ENCODE measurements at regions of chr15 and their contacts with region 1.

Region 1: DNA sequence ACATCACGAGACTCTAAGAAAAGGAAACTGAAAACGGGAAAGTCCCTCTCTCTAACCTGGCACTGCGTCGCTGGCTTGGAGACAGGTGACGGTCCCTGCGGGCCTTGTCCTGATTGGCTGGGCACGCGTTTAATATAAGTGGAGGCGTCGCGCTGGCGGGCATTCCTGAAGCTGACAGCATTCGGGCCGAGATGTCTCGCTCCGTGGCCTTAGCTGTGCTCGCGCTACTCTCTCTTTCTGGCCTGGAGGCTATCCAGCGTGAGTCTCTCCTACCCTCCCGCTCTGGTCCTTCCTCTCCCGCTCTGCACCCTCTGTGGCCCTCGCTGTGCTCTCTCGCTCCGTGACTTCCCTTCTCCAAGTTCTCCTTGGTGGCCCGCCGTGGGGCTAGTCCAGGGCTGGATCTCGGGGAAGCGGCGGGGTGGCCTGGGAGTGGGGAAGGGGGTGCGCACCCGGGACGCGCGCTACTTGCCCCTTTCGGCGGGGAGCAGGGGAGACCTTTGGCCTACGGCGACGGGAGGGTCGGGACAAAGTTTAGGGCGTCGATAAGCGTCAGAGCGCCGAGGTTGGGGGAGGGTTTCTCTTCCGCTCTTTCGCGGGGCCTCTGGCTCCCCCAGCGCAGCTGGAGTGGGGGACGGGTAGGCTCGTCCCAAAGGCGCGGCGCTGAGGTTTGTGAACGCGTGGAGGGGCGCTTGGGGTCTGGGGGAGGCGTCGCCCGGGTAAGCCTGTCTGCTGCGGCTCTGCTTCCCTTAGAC is at the start of gene B2M:
- DNase-seq: peak; percentile 94
- H3K4me3 ChIP-seq: peak within 1 kb of the TSS; percentile 92
- H3K27ac ChIP-seq: peak within 1 kb of the TSS; percentile 99
- H3K4me1 ChIP-seq: peaks cover 69% of the 10 kb centered on the region
- H3K27me3 ChIP-seq: no peaks in the 10 kb centered on the region
- CTCF ChIP-seq: no peak
- total RNA-seq, gene B2M: 1,128 TPM

Region 2: DNA sequence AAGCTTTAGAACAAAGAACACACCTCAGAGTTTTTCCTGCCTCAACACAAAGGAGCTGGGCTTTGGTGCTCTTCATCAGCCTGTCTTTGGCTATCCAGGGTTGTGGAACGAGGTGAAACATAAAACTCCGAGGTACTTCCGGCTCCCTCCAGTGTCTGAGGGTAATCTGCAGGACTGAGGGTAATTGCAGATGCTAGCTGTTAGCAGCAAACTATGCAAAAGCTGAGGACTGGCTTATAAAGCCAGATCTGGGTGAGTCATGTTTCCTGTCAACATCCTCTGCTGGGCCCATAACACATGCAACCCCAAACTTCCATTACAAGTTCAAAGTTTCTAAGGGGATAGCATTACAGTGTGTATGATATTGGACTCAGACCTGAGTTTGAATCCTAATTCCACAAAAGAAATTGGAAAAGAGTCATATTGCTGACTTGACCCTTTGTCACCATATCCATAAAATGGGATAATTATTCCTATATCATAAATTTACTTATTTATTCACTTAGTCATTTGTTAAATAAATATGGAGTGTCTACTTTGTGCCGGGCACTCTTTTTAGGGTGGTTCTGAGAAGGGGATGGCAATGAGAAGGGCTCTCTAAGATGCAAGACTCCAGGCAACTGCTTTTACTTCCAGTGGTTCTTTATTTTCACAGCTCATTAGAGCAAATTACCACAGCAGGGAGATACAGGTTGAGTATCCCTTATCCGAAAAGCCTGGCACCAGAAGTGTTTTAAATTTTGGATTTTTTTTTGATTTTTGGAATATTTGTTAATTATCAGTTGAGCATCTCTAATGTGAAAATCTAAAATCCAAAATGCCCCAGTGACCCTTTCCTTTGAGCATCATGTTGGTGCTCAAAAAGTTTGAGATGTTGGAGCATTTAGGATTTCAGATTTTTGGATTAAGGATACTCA is 15.3 kb after region 1 on chr15:
- intact Hi-C with region 1: loop called (anchors 2 kb)
- DNase-seq: no peak
- H3K4me3 ChIP-seq: peak overlapping the region; percentile 35
- H3K27ac ChIP-seq: peak overlapping the region; percentile 99
- H3K4me1 ChIP-seq: peaks cover 61% of the 10 kb centered on the region
- H3K27me3 ChIP-seq: no peaks in the 10 kb centered on the region
- CTCF ChIP-seq: no peak

Region 3: GRCh38 chr15:44775953-44776352 is 64.4 kb after region 1 on chr15:
- intact Hi-C with region 1: loop called (anchors 10 kb)
- DNase-seq: no peak
- H3K4me3 ChIP-seq: no peak overlapping the region
- H3K27ac ChIP-seq: no peak overlapping the region
- H3K4me1 ChIP-seq: no peaks in the 10 kb centered on the region
- H3K27me3 ChIP-seq: no peaks in the 10 kb centered on the region
- CTCF ChIP-seq: no peak